ENCODE measurements at regions of chr19 and their contacts with region 1.

Region 1: GRCh38 chr19:11528551-11529341 is at the start of gene ECSIT:
- DNase-seq: peak; percentile 89 to 96
- ATAC-seq: peak; percentile 96 to 99 (median 97)
- H3K4me3 ChIP-seq: peak within 1 kb of the TSS; percentile 46
- H3K4me3 Mint-ChIP-seq: peak within 1 kb of the TSS; percentile 96
- H3K27ac ChIP-seq: peak within 1 kb of the TSS; percentile 76
- H3K27ac Mint-ChIP-seq: peak within 1 kb of the TSS; percentile 94 to 95
- H3K4me1 ChIP-seq: peaks cover 17% of the 10 kb centered on the region
- H3K4me1 Mint-ChIP-seq: peaks cover 14 to 22% of the 10 kb centered on the region in 2 donors
- H3K27me3 ChIP-seq: no peaks in the 10 kb centered on the region
- H3K27me3 Mint-ChIP-seq: no peaks in the 10 kb centered on the region
- CTCF ChIP-seq: no peak
- total RNA-seq, gene ECSIT: 23.6 to 24.5 (median 24.1) TPM

Region 2: GRCh38 chr19:11505032-11505503 is 23.7 kb before region 1 on chr19:
- intact Hi-C with region 1: loop called (anchors 1 kb)
- DNase-seq: peak; percentile 94 to 97
- ATAC-seq: peak; percentile 92 to 97 (median 92)
- H3K4me3 ChIP-seq: peak overlapping the region; percentile 40
- H3K4me3 Mint-ChIP-seq: peak overlapping the region; percentile 89
- H3K27ac ChIP-seq: peak overlapping the region; percentile 78
- H3K27ac Mint-ChIP-seq: peak overlapping the region; percentile 88 to 92
- H3K4me1 ChIP-seq: peaks cover 16% of the 10 kb centered on the region
- H3K4me1 Mint-ChIP-seq: peaks cover 15 to 16% of the 10 kb centered on the region in 2 donors
- H3K27me3 ChIP-seq: no peaks in the 10 kb centered on the region
- H3K27me3 Mint-ChIP-seq: no peaks in the 10 kb centered on the region
- CTCF ChIP-seq: no peak